ENCODE measurements at regions of chr11 and their contacts with region 1.

Region 1: DNA sequence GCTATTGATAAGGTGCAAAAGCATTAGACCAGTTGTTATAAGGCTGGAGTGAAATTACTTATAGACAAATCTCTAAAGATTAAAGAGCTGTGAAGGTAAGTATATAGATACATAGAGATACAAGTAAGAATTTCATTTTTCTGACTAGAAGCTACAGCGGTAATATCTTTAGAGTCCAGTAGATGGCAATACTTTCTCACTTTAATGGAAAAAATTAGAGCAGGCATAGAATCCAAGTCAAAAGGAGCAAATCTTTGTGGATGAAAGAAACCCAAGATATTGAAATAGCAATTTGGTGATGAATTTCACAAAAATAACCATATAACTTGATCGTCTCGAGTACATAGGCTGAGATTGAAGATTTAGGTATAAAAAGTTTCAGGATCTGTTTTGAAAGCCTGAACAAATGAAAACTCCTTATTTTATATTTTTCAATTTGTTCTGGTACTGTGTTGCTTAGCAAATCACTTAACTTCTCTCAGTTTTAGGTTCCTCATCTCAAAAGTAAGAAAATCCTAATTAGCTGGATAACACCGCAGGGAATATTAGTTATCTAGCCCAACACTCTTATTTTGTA is 81.9 kb downstream of the UVRAG start:
- DNase-seq: no peak
- H3K4me3 Mint-ChIP-seq: no peak overlapping the region
- H3K27ac Mint-ChIP-seq: no peak overlapping the region
- H3K4me1 Mint-ChIP-seq: no peaks in the 10 kb centered on the region
- H3K27me3 Mint-ChIP-seq: no peaks in the 10 kb centered on the region
- CTCF ChIP-seq: peak; percentile 56

Region 2: DNA sequence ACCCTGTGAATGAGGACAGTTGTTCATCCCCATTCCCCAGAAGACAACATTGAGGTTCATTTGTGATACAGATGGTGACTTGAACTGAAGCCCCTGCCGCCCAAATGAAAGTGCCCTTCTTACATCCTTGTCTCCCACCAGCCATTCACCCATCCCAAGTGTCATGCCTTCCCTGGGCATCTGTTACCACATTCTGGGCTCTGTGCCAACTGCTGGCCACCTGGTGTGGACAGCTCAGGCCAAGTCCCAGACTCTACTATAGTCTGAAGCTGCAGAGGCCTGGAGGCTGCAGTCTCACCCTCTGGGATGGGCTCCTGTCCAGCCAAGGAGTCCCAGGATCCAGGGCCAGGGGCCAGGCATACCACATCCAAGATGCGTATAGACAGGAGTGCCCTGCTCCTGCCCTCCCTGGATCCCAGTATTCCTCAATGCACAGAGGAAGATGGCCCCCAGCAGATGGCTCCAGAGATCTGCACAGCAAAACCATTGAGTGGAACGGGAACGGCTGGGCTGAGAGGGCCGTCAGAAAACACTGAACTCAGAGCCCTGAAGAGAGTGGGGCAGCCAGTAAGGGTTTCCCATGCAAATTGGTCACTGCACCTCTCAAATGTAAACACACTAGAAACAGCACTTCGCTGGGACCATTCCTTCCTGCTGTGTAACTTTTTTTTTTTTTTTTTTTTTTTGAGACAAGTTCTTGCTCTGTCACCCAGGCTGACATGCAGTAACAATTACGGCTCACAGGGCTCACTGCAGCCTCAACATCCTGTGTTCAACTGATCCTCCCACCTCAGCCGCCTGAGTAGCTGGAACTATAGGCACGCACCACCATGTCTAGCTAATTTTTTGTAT is 568.3 kb before region 1 on chr11:
- CTCF ChIA-PET with region 1: no interaction called
- intact Hi-C with region 1: no loop called
- DNase-seq: peak; percentile 67
- H3K4me3 Mint-ChIP-seq: no peak overlapping the region
- H3K27ac Mint-ChIP-seq: peak overlapping the region; percentile 7
- H3K4me1 Mint-ChIP-seq: peaks cover 38% of the 10 kb centered on the region
- H3K27me3 Mint-ChIP-seq: no peaks in the 10 kb centered on the region
- CTCF ChIP-seq: peak; percentile 71

Region 3: GRCh38 chr11:75802913-75803820 is 93.8 kb before region 1 on chr11:
- CTCF ChIA-PET with region 1: no interaction called
- intact Hi-C with region 1: no loop called
- DNase-seq: peak; percentile 79
- H3K4me3 Mint-ChIP-seq: no peak overlapping the region
- H3K27ac Mint-ChIP-seq: no peak overlapping the region
- H3K4me1 Mint-ChIP-seq: no peaks in the 10 kb centered on the region
- H3K27me3 Mint-ChIP-seq: no peaks in the 10 kb centered on the region
- CTCF ChIP-seq: peak; percentile 83

Region 4: GRCh38 chr11:76318744-76319384 is 421.9 kb after region 1 on chr11:
- CTCF ChIA-PET with region 1: interaction called, 8 read pairs
- intact Hi-C with region 1: loop called (anchors 5 kb)
- DNase-seq: peak; percentile 84
- H3K4me3 Mint-ChIP-seq: no peak overlapping the region
- H3K27ac Mint-ChIP-seq: no peak overlapping the region
- H3K4me1 Mint-ChIP-seq: peaks cover 9% of the 10 kb centered on the region
- H3K27me3 Mint-ChIP-seq: peaks cover 54% of the 10 kb centered on the region
- CTCF ChIP-seq: peak; percentile 83